T-cell (primary cell): ENCODE measurements at regions of chr3 and their contacts with region 1.

Region 1: DNA sequence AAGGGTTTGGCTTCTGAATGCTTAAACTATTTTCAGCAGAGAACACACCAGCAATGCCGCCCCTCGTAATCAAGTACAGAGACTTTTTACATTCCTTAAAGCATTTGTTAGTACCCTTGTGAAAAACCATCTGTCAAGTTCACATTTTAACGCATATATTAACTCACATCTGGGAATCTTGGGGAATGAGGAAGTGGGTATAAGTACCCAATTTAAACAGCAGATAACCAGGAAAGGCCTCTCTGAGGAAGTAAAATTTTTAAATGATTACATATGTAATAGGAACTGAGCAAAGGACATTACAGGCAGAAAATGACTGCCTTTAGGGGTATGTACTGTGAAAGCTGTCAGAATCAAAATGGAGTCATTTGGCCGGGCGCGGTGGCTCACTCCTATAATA is 12.8 kb upstream of the CFAP44 start:
- DNase-seq: no peak
- ATAC-seq: no peak
- H3K4me3 ChIP-seq: no peak overlapping the region
- H3K4me3 Mint-ChIP-seq: no peak overlapping the region
- H3K27ac ChIP-seq: no peak overlapping the region
- H3K27ac Mint-ChIP-seq: no peak overlapping the region
- H3K4me1 ChIP-seq: no peaks in the 10 kb centered on the region
- H3K4me1 Mint-ChIP-seq: no peaks in the 10 kb centered on the region
- H3K27me3 ChIP-seq: no peaks in the 10 kb centered on the region
- H3K27me3 Mint-ChIP-seq: no peaks in the 10 kb centered on the region

Region 2: DNA sequence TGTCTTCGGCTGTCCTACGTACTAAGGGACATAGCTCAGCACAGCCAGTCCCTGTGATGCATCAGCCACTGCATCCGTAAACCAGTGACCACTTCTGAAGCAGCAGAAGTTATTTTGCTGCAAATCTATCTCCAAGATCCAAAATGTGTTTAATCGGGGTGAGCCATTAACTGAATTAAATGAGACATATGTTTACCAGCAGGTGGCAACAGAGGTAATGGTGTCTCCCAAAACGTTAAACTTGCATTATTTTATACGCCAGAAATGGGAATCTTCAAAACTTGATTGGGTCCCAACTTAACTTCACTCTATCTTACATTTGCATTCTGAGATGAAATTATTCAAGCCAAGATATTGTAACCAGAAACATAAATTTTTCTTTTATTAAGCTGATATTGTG is 318.0 kb before region 1 on chr3:
- CTCF ChIA-PET with region 1: interaction called in 1 of 2 experiments, 12 read pairs
- POLR2A ChIA-PET with region 1: no interaction called
- DNase-seq: peak in 1 of 35 experiments; percentile 7
- ATAC-seq: no peak
- H3K4me3 ChIP-seq: no peak overlapping the region
- H3K4me3 Mint-ChIP-seq: no peak overlapping the region
- H3K27ac ChIP-seq: no peak overlapping the region
- H3K27ac Mint-ChIP-seq: no peak overlapping the region
- H3K4me1 ChIP-seq: no peaks in the 10 kb centered on the region
- H3K4me1 Mint-ChIP-seq: no peaks in the 10 kb centered on the region
- H3K27me3 ChIP-seq: no peaks in the 10 kb centered on the region
- H3K27me3 Mint-ChIP-seq: no peaks in the 10 kb centered on the region